Activated naive CD4-positive, alpha-beta T cell treated with anti-CD3 and anti-CD28 coated beads for 36 hours (primary cell): ENCODE measurements at regions of chr4 and their contacts with region 1.

Region 1: GRCh38 chr4:158259955-158260575 is 49.8 kb downstream of the TMEM144 start:
- DNase-seq: no peak
- H3K4me3 Mint-ChIP-seq: no peak overlapping the region
- H3K27ac Mint-ChIP-seq: no peak overlapping the region
- H3K4me1 Mint-ChIP-seq: no peaks in the 10 kb centered on the region
- H3K27me3 Mint-ChIP-seq: no peaks in the 10 kb centered on the region

Region 2: GRCh38 chr4:158056689-158057245 is 203.3 kb before region 1 on chr4:
- CTCF ChIA-PET with region 1: no interaction called
- intact Hi-C with region 1: no loop called
- DNase-seq: no peak
- H3K4me3 Mint-ChIP-seq: no peak overlapping the region
- H3K27ac Mint-ChIP-seq: no peak overlapping the region
- H3K4me1 Mint-ChIP-seq: no peaks in the 10 kb centered on the region
- H3K27me3 Mint-ChIP-seq: no peaks in the 10 kb centered on the region

Region 3: DNA sequence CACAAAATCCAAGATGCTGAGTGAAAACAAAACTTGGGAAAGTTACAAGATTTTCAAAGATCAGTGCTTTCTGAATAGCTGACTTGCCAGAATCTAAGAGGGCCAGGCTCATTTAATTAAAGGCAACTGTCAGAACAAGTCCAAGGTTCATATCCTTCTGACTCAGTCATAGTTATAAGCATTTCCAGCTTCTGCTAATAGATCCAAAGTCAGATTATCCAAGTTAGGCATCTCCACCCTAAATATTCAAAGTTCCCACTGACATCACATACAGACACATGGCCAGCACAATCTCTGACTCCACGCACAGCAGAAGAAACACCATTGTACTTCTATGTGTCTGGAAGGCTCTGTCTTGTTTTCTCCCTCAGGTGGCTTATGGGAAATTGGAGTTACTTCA is 129.0 kb before region 1 on chr4:
- CTCF ChIA-PET with region 1: no interaction called
- intact Hi-C with region 1: no loop called
- DNase-seq: no peak
- H3K4me3 Mint-ChIP-seq: no peak overlapping the region
- H3K27ac Mint-ChIP-seq: no peak overlapping the region
- H3K4me1 Mint-ChIP-seq: no peaks in the 10 kb centered on the region
- H3K27me3 Mint-ChIP-seq: no peaks in the 10 kb centered on the region

Region 4: DNA sequence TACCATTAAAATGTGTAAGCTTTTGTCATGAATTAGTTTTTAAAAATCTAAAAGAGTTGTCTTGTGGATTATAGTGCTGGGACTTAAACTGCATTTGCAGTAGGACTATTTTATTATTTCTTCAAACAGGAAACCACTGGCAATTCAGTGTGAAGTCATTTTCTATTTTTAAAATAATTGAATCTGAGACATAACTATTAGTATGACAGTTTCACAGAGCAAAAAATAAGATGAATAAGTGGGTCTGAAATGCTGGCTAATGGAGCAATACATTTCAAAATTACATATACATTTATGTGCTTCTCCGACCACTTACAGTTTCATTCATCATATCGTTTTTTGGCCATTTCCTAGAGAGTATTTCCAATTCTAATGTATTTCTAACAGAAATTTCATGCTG is 767.5 kb after region 1 on chr4:
- CTCF ChIA-PET with region 1: no interaction called
- intact Hi-C with region 1: loop called (anchors 5 kb)
- DNase-seq: no peak
- H3K4me3 Mint-ChIP-seq: no peak overlapping the region
- H3K27ac Mint-ChIP-seq: no peak overlapping the region
- H3K4me1 Mint-ChIP-seq: no peaks in the 10 kb centered on the region
- H3K27me3 Mint-ChIP-seq: peaks cover 8% of the 10 kb centered on the region